K562 (cell line): ENCODE measurements at regions of chr14 and their contacts with region 1.

Region 1: DNA sequence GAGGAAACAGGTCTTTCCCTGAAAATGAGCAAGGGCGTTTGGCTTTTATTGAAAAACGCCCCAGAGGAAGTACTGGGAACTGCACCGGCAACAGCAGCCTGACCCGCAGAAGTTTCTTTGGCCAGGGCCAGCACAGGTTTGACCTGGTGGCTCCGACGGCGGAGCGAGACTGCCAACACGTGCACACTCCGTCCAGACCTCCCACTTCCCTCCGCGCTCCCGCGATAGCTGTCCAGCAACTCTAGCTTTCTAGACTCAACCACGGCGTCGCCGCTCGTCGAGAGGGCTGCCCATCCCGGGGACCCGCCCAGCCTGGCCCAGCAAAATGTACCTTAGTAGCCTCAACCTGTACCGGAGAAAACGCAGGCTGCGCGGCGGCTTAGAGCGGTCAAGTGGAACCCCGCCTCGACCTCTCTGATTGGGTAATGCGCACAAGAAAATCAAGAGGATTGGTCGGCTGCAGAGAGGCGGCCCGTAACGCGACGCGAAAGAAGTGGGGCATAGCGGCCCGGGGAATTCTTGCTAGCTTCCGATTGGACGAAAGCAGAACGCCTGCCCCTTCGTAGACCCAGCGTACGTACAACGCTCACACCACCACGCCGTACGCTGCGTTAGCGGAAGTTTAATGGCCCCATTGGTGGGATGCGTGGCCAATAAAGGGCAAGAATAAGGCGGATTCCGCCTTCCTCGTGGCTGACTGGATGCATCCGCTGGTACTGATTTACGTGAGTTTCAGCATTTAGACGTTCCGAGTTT is at the start of gene WDR89:
- DNase-seq: peak; percentile 90 to 97 (median 95)
- ATAC-seq: peak; percentile 92
- H3K4me3 ChIP-seq: peak within 1 kb of the TSS; percentile 56
- H3K27ac ChIP-seq: peak within 1 kb of the TSS; percentile 92
- H3K4me1 ChIP-seq: peaks cover 0 to 7% of the 10 kb centered on the region in 2 experiments; a peak in 4 of 5 replicates
- H3K27me3 ChIP-seq: no peaks in the 10 kb centered on the region
- CTCF ChIP-seq: peak; percentile 55 to 83 (median 68)
- EP300 ChIP-seq: no peak
- POLR2A ChIP-seq: peak; percentile 88
- RAD21 ChIP-seq: peak; percentile 20 to 23; a peak in 2 of 4 replicates
- polyA plus RNA-seq, gene WDR89: 16.2 to 23.8 TPM

Region 2: DNA sequence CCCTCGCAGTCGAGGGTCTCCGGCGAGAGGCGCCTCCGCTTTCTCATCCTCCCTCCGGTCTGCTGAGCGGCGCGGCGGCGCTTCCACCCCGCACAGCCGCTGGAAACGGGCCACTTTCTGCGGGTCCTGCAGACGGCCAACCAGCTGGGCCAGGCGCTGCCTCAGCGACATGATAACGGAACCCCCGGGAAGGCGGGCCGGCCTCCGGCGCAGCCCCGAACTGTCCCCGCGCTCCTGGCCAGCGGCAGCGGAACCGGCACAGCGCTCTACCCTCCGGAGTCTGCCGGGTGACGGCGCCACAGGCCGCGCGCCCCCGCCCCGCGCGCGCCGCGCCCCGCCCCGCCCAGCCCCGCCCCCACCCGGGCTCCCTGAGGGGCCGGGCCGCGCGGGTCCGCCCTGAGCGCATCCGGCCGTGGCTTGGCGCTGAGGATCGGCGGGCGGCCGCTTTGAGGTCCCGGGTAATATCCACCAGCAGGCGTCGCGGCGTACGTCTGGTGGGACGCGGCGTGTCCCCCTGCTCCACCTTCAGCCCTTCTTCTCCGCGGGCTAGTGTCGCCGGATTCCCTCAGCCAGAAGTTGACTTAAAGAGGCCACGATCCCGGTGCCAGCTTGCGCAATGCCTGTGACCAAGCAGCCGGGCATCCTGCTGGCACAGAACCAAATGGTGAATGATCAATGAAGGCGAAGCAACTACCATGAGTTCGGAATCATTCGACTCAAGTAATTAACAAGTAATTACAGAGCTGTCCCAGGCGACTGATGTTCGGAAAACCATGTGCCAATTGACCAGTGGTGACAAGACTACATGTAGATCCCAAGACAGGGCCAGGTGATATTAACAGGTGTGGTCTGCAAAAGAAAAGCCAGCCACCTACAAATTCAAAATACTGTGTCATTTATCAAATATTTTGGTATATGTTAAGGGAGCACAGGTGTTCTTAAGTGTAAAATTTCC is 86.4 kb after region 1 on chr14 and contains the start of gene SGPP1:
- CTCF ChIA-PET with region 1: no interaction called
- POLR2A ChIA-PET with region 1: no interaction called
- in situ Hi-C with region 1: no loop called
- intact Hi-C with region 1: loop called (anchors 2 kb)
- DNase-seq: peak; percentile 81 to 90 (median 88)
- ATAC-seq: peak; percentile 88
- H3K4me3 ChIP-seq: peak within 1 kb of the TSS; percentile 88
- H3K27ac ChIP-seq: peak within 1 kb of the TSS; percentile 66
- H3K4me1 ChIP-seq: peaks cover 0 to 11% of the 10 kb centered on the region in 2 experiments; a peak in 2 of 5 replicates
- H3K27me3 ChIP-seq: no peaks in the 10 kb centered on the region
- CTCF ChIP-seq: peak in 2 of 3 experiments; percentile 40 to 54; a peak in 4 of 6 replicates
- EP300 ChIP-seq: no peak
- POLR2A ChIP-seq: peak; percentile 65
- RAD21 ChIP-seq: peak in 1 of 2 experiments; percentile 30; a peak in 1 of 4 replicates
- polyA plus RNA-seq, gene SGPP1: 2.2 to 2.8 TPM

Region 3: GRCh38 chr14:64147126-64147790 is 505.6 kb after region 1 on chr14:
- CTCF ChIA-PET with region 1: no interaction called
- POLR2A ChIA-PET with region 1: no interaction called
- in situ Hi-C with region 1: no loop called
- intact Hi-C with region 1: no loop called
- DNase-seq: no peak
- ATAC-seq: peak; percentile 32; the same call in 2 of the 3 replicates
- H3K4me3 ChIP-seq: no peak overlapping the region
- H3K27ac ChIP-seq: no peak overlapping the region
- H3K4me1 ChIP-seq: no peaks in the 10 kb centered on the region
- H3K27me3 ChIP-seq: peaks cover 5 to 9% of the 10 kb centered on the region in 2 experiments
- CTCF ChIP-seq: no peak
- EP300 ChIP-seq: no peak
- POLR2A ChIP-seq: no peak
- RAD21 ChIP-seq: no peak